ENCODE measurements at regions of chr12 and their contacts with region 1.

Region 1: GRCh38 chr12:67355578-67356379 is 86.6 kb downstream of the CAND1 start:
- DNase-seq: no peak

Region 2: GRCh38 chr12:67202043-67203012 is 153.5 kb before region 1 on chr12:
- intact Hi-C with region 1: no loop called
- DNase-seq: no peak

Region 3: DNA sequence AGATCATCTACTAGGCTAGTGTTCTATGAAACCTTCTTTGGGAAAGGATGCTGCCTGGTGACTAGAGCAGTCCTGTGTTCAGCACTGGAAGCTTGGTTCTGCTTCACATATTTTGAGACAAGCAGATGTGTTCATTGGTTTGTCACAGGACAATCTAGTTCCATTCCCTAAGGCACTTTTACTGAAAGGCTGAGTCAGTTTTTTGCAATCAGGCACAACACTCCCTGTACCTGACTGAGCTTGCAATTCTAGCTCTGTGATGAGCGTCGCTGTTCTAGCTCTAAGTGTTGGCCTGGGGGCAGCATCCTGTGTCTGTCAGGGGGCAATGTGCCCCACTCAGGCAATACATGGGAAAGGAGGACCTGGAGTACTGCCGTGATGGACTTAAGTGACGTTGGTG is 57.8 kb after region 1 on chr12:
- intact Hi-C with region 1: loop called (anchors 5 kb)
- DNase-seq: no peak

Region 4: DNA sequence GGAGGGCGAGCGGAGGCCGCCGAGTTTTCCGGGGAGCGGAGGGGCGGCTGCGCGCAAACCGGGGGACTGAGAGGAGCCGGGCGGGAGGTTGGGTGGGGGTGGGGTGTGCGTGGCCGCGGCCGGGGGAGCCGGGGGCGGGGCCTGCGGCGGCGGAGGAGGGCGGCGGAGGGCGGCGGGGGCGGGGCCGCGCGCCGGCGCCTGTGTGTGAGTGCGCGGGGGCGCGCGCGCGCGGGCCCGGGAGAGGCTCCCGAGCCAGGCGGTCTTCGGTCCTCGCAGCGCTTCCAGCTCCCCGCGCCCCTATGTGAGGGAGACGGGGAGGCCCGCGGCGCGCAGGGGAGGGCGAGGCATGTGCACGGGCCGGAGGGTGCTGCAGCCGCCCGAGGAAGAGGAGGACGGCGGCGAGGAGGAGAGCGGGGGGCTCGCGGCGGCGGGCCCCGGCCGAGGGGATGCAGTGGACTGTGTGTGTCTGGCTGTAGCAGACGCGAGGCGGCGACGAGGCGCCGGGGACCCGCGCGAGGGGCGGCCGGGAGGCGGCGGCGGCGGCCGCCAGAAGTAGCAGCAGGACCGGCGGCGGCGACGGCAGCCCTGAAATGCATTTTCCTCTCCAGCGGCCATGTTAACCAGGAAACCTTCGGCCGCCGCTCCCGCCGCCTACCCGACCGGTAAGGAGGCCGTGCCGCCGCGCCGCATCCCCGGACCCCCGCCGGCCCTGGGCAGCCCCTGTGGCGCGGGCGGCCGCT is 292.9 kb after region 1 on chr12 and contains the start of gene DYRK2:
- intact Hi-C with region 1: loop called (anchors 5 kb)
- DNase-seq: peak; percentile 87
- total RNA-seq, gene DYRK2: 56.0 TPM

Region 5: GRCh38 chr12:68031881-68032739 is 676.3 kb after region 1 on chr12:
- intact Hi-C with region 1: loop called (anchors 10 kb)
- DNase-seq: no peak

Region 6: DNA sequence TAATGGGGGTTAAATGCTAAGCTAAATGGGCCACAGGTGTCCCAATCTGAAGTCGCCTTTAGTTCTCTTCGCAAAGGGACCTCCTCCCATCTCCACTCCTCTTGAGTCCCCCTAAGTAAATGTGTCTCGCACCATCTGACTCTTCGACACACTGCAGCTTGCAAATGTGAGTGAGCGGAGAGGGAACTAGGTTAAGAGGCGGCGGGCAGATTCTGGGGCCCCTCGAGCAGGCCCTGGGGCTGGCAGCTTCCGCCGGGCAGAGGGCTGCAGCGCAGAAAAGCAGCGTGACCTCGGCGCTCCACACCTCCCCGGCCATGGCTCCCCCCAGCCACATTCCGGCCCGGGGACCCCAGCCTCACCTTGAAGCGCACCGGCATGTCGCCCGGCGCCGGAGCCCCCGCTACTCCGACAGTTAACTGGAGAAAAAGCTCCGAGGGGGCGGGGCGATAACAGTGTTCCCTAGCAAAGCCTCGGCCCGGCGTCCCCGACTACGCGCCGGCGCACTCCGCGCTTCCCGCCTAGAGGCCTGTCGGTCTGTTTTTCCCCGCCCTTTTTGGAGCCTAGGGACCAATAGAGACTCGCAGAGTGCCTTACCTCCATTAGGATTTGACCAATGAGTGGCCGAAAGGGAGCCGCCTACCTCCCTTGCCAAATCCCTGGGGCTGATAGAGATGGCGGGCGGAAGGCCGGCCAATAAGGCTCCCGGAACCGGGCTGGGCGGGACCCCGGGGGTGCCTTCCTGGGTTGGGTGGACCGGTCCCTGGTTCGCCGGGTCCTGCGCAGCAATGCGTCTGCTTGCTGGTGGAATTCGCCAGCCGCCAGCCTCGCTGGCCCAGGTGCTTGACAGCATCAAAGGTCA is 976.3 kb after region 1 on chr12 and contains the start of gene MDM1:
- intact Hi-C with region 1: loop called (anchors 5 kb)
- DNase-seq: peak; percentile 99
- total RNA-seq, gene MDM1: 5.0 TPM

Measured in cardiac septum (tissue), 1 donor.